CD8-positive, alpha-beta T cell (primary cell): ENCODE measurements at regions of chr14 and their contacts with region 1.

Region 1: DNA sequence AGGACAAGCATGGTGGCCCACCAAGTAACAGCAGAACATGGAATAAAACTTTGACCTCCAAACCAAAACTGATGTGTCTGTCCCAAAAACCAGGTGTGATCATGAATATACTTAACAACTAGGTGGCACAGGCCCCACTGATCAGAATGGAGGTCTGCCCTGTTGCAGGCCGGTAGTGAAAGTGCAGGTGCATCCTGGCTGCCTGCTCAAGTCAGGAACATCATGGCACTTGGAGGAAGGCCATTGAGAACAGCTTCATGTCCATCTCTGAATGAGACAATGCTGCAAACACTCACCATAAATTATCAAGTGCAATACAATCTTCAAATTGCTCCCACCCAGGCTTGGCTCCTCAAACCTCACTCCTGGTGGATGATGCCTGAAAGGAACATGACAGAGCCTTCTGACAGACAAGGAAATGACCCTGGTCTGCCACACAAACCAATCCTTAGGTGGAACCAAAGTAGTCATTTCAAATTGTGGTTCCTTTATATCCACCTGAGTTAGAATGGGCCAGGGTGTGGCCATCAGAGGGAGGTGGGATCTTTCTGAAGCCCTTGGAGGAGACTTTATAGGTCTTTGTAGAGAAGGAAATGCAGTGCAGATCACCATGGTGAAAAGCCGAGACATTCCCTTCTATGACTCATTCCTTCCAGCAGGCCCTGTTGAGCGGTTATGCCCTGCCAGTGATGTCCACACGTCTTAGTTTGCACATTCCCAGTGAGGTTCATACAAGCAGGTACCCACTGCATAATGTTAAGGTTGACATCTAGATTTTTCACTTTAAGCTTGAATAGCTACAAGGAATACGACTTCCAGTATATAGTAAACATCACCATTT is 36.0 kb downstream of the EGLN3 start:
- DNase-seq: no peak
- ATAC-seq: no peak
- H3K4me3 ChIP-seq: no peak overlapping the region
- H3K4me3 Mint-ChIP-seq: no peak overlapping the region
- H3K27ac ChIP-seq: no peak overlapping the region
- H3K27ac Mint-ChIP-seq: no peak overlapping the region
- H3K4me1 ChIP-seq: no peaks in the 10 kb centered on the region
- H3K4me1 Mint-ChIP-seq: no peaks in the 10 kb centered on the region
- H3K27me3 ChIP-seq: no peaks in the 10 kb centered on the region
- H3K27me3 Mint-ChIP-seq: no peaks in the 10 kb centered on the region
- CTCF ChIP-seq: no peak

Region 2: GRCh38 chr14:33899723-33900341 is 15.1 kb before region 1 on chr14:
- CTCF ChIA-PET with region 1: interaction called, 8 read pairs
- POLR2A ChIA-PET with region 1: no interaction called
- intact Hi-C with region 1: loop called in 1 of 2 experiments (anchors 2 kb)
- DNase-seq: no peak
- ATAC-seq: no peak
- H3K4me3 ChIP-seq: no peak overlapping the region
- H3K4me3 Mint-ChIP-seq: no peak overlapping the region
- H3K27ac ChIP-seq: no peak overlapping the region
- H3K27ac Mint-ChIP-seq: no peak overlapping the region
- H3K4me1 ChIP-seq: no peaks in the 10 kb centered on the region
- H3K4me1 Mint-ChIP-seq: peaks cover 4% of the 10 kb centered on the region
- H3K27me3 ChIP-seq: no peaks in the 10 kb centered on the region
- H3K27me3 Mint-ChIP-seq: no peaks in the 10 kb centered on the region
- CTCF ChIP-seq: no peak